Prostate gland (tissue), 2 donors: ENCODE measurements at regions of chr3 and their contacts with region 1.

Region 1: DNA sequence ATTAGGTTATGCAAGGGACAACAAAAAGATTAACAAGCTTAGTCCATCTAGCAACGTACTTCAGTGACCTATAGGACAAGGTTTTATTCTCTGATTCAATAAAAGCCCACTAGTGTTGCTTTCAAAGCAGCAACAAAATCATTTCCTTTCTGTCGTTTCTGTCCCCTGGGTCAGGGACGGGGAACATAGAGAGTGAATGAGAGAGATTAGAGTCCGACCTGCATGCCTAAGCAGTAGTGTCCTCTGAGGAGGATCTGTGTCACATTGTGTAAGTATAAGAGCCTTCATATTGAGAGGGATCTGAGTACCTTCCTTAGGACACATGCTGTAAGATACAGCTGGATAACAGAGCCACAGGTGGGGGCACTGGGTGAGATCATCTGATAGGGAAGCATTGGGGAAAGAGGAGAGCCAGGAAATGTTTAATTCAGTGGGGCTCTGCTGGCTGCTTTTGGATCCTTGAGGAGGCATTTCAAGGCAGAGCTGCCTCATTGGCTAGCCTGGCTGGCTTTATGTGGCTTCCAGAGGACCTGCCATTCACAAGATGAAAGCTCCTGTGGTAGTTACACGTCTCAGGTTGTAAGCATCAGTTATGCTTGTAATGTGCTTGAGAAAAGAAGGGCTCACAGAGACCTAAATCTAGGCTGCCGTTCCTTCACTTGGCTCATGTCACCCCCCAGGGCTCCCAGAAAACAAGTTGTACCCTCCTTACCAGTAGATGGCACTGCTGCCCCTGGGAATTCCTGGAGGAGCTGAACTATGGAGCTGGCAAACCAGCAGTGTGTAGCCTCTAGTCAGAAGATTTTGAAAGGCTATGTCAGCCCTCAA is 2.7 kb downstream of the TMEM108 start:
- DNase-seq: peak; percentile 68
- H3K4me3 ChIP-seq: no peak overlapping the region
- H3K27ac ChIP-seq: no peak overlapping the region
- H3K4me1 ChIP-seq: no peaks in the 10 kb centered on the region
- H3K27me3 ChIP-seq: no peaks in the 10 kb centered on the region
- CTCF ChIP-seq: peak in 3 of 4 experiments; percentile 61 to 73 (median 63)
- POLR2A ChIP-seq: no peak

Region 2: DNA sequence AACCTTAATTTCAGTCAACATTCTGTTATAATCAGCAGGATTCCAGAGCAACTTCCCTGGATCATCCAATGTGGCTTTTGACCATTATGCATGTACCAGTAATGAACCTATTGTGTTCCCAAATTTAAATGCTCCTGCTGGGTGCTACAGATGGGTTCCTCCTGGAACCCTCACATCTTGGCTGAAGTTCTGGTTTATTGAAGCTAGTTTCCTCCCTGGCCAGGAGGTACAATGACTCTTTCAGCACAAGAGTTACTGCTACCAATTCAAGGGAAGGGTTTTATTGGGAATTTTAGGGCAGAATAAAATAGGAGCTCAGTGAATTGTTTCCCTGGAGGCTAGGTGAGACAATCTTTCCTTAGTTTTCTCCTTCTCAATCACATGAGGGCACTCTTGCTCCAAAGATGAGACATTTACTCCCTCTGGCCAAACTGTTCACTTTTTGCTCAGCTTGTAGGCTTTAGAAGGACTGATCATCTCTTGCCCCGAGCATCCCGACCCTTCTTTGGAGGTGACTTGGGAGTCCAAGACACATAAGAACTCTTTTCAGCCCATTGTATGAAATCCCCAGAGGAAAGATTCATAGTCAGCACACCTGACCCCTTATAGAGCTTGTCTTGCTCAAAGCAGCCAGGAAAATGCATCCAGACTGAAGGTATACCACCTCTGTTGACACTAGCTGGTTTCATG is 309.9 kb before region 1 on chr3:
- intact Hi-C with region 1: loop called (anchors 5 kb)
- DNase-seq: no peak
- H3K4me3 ChIP-seq: no peak overlapping the region
- H3K27ac ChIP-seq: no peak overlapping the region
- H3K4me1 ChIP-seq: no peaks in the 10 kb centered on the region
- H3K27me3 ChIP-seq: no peaks in the 10 kb centered on the region
- CTCF ChIP-seq: peak in 3 of 4 experiments; percentile 21 to 31 (median 29)
- POLR2A ChIP-seq: no peak

Region 3: DNA sequence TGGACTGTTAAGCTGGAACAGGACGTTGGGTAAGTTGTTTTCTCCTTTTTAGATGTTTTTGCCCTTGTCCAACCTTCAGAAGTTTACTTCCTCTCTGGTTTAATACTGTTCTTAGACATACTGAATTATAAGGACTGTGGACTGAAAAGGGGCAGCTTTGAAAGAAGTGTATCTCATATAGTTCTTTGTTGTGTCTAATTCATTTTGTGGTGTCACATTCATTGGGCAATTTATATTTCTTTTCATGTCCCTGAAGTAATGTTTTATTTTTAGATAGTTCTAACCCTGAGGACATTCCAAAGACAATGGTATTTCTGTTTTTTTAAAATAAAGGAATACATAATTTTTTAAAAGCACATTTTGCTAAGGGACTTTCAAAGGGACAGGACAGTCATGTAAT is 42.5 kb after region 1 on chr3:
- intact Hi-C with region 1: no loop called
- DNase-seq: no peak
- H3K4me3 ChIP-seq: no peak overlapping the region
- H3K27ac ChIP-seq: no peak overlapping the region
- H3K4me1 ChIP-seq: no peaks in the 10 kb centered on the region
- H3K27me3 ChIP-seq: no peaks in the 10 kb centered on the region
- CTCF ChIP-seq: no peak
- POLR2A ChIP-seq: no peak

Region 4: DNA sequence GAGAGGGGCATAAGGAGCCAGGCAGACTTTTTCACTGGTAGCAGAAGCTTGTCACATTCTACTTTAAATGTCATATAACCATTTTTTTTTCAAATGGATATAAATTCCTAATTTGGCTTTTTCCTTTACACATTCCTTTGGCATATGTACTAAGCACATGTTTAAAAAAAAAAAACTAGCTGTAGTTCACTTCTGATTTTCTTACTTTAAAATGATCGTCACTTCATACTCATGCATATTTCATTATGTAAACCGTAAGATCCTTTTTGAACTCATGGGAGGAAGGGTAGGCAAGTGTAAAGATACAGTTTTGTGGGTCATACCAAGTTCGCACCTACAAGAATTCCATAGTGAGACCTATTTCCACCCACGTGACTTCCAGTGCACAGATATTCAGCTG is 313.8 kb after region 1 on chr3:
- intact Hi-C with region 1: no loop called
- DNase-seq: no peak
- H3K4me3 ChIP-seq: no peak overlapping the region
- H3K27ac ChIP-seq: no peak overlapping the region
- H3K4me1 ChIP-seq: no peaks in the 10 kb centered on the region
- H3K27me3 ChIP-seq: no peaks in the 10 kb centered on the region
- CTCF ChIP-seq: no peak
- POLR2A ChIP-seq: no peak

Region 5: GRCh38 chr3:133377396-133377795 is 336.5 kb after region 1 on chr3:
- intact Hi-C with region 1: loop called (anchors 2 kb)
- DNase-seq: no peak
- H3K4me3 ChIP-seq: no peak overlapping the region
- H3K27ac ChIP-seq: no peak overlapping the region
- H3K4me1 ChIP-seq: no peaks in the 10 kb centered on the region
- H3K27me3 ChIP-seq: no peaks in the 10 kb centered on the region
- CTCF ChIP-seq: peak in 3 of 4 experiments; percentile 19 to 35 (median 31)
- POLR2A ChIP-seq: no peak

Region 6: DNA sequence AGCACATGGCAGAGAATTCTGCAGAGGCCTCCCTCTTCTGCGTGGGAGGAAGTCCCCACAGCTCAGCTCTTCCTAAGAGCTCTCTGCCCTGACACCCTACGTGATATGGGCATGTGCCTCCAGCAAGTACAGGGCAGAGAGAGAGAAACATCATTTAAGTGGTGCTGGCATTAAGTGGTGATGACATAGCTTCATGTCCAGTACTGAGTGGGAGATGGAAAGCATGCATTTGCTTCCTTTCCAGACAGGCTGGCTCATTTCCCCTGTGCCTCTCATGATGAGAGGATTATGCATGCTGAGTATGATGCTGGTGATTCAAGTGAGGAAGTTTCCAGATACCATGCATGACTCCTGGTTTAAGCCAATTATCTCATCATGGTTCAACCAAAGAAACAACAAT is 385.8 kb after region 1 on chr3:
- intact Hi-C with region 1: loop called (anchors 5 kb)
- DNase-seq: no peak
- H3K4me3 ChIP-seq: no peak overlapping the region
- H3K27ac ChIP-seq: no peak overlapping the region
- H3K4me1 ChIP-seq: no peaks in the 10 kb centered on the region
- H3K27me3 ChIP-seq: no peaks in the 10 kb centered on the region
- CTCF ChIP-seq: no peak
- POLR2A ChIP-seq: no peak